ENCODE measurements at regions of chr6 and their contacts with region 1.

Region 1: DNA sequence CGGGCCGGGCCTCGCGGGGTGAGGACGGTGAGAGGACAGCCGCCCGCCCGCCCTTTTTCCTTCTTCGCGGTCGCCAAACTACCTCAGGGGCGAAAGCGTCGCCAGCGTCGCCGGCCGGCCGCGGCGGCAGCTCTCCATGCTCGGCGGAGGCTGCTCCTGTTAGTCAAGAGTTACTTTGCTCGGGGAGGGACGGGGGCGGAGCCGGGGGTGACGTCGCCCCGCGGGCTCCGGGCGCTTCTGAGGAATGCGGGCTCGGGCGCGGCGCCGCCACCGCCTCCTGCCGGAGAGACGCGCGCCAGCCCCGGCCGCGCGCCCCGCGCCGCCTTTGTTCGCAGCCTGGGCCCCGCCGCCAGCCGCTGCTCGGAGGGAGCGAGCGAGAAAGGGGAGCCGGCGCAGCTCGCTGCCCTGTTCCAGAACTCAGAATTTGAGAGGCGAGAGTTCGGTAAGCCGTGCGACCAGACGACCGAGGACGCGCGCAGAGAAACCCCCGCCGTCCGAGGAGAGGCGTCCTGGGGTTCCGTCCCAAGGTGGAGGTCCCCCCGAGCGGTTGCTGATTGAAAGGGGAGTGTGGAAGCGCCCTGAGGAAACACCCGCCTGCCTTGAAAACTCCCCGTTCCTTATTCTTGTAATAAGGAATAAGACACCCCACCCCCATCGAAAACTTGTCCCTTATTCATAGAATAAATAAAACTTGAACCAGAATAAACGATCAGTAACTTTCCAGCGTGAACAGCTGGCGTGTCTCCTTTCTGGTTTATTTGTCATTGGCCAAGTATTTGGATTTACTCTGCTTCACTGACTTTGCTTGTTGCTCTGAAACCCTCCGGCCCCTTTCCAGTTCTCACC is at the start of gene PTPRK:
- DNase-seq: peak; percentile 70 to 90 (median 87)
- ATAC-seq: peak; percentile 95
- H3K4me3 ChIP-seq: peak within 1 kb of the TSS; percentile 77
- H3K4me3 Mint-ChIP-seq: peak within 1 kb of the TSS; percentile 90 to 98 (median 94)
- H3K27ac ChIP-seq: peak within 1 kb of the TSS; percentile 59
- H3K27ac Mint-ChIP-seq: peak within 1 kb of the TSS; percentile 73 to 94 (median 82)
- H3K4me1 ChIP-seq: peaks cover 5 to 17% of the 10 kb centered on the region in 2 donors
- H3K4me1 Mint-ChIP-seq: peaks cover 8 to 22% (median 14%) of the 10 kb centered on the region in 7 donors
- H3K27me3 ChIP-seq: no peaks in the 10 kb centered on the region
- H3K27me3 Mint-ChIP-seq: peaks cover 52 to 89% (median 68%) of the 10 kb centered on the region in 5 donors
- total RNA-seq, gene PTPRK: 1.6 to 6.5 (median 3.9) TPM

Region 2: GRCh38 chr6:127366281-127367022 is 1154.2 kb before region 1 on chr6:
- CTCF ChIA-PET with region 1: no interaction called
- POLR2A ChIA-PET with region 1: no interaction called
- intact Hi-C with region 1: no loop called
- DNase-seq: no peak
- ATAC-seq: peak; percentile 70
- H3K4me3 ChIP-seq: no peak overlapping the region
- H3K4me3 Mint-ChIP-seq: no peak overlapping the region
- H3K27ac ChIP-seq: no peak overlapping the region
- H3K27ac Mint-ChIP-seq: no peak overlapping the region
- H3K4me1 ChIP-seq: no peaks in the 10 kb centered on the region
- H3K4me1 Mint-ChIP-seq: no peaks in the 10 kb centered on the region
- H3K27me3 ChIP-seq: no peaks in the 10 kb centered on the region
- H3K27me3 Mint-ChIP-seq: no peaks in the 10 kb centered on the region

Region 3: GRCh38 chr6:127792616-127793015 is 728.0 kb before region 1 on chr6:
- CTCF ChIA-PET with region 1: no interaction called
- POLR2A ChIA-PET with region 1: no interaction called
- intact Hi-C with region 1: loop called in 1 of 2 experiments (anchors 1 kb)
- DNase-seq: peak in 7 of 9 donors; percentile 44 to 70 (median 60)
- ATAC-seq: peak; percentile 83
- H3K4me3 ChIP-seq: peak overlapping the region; percentile 3
- H3K4me3 Mint-ChIP-seq: peak overlapping the region in 8 of 10 donors; percentile 14 to 80 (median 54)
- H3K27ac ChIP-seq: peak overlapping the region; percentile 43
- H3K27ac Mint-ChIP-seq: peak overlapping the region in 8 of 9 donors; percentile 22 to 90 (median 78)
- H3K4me1 ChIP-seq: peaks cover 34 to 43% of the 10 kb centered on the region in 2 donors
- H3K4me1 Mint-ChIP-seq: peaks cover 45 to 100% (median 92%) of the 10 kb centered on the region in 7 donors
- H3K27me3 ChIP-seq: no peaks in the 10 kb centered on the region
- H3K27me3 Mint-ChIP-seq: no peaks in the 10 kb centered on the region

Region 4: DNA sequence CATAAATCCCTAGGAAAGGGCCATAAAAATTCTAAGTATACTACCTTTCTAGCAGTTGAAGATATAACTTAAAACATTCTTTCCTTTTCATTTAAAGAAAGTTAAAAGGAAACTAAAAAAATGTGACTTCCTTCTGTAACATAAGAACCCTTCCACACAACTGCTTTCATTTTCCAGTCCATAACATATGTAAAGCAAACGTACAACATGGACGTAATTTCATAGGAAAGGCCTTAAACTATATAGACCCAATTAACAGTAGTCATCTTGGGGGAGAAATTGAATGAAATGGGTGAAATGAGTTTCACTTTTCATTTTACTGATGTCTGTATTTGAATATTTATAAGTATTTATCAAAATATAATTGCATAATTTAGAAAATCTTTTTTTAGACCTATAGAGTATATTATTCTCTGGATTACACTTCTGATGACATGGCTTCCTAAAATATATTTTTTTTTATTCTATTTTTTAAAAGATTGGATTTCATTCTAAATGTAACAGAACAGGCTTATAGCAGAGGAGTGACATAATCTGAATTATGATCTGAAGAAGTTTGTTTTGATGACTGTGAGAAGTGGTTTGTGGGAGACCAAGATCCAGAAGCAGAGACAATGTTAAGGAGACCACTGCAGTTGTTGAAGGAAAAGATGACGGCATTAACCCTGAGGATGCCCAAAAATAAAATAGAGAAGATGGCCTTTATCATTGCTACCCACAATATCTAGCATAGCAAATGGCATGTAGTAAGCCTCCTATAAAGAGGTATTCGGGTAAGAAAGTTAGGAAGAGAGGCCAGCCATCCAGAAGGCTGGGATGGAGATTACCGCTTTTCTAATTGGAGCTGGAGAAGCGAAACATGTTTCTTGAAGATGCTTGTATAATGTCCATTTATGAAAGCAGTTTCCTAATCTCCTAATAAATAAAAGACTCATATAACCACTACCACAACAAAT is 260.7 kb before region 1 on chr6:
- CTCF ChIA-PET with region 1: no interaction called
- POLR2A ChIA-PET with region 1: no interaction called
- intact Hi-C with region 1: loop called (anchors 5 kb)
- DNase-seq: peak in 7 of 9 donors; percentile 11 to 42 (median 29)
- ATAC-seq: peak; percentile 74
- H3K4me3 ChIP-seq: peak overlapping the region; percentile 30
- H3K4me3 Mint-ChIP-seq: peak overlapping the region; percentile 67 to 91 (median 84)
- H3K27ac ChIP-seq: peak overlapping the region; percentile 45
- H3K27ac Mint-ChIP-seq: peak overlapping the region; percentile 74 to 93 (median 90)
- H3K4me1 ChIP-seq: peaks cover 12 to 15% of the 10 kb centered on the region in 2 donors
- H3K4me1 Mint-ChIP-seq: peaks cover 15 to 46% (median 28%) of the 10 kb centered on the region in 7 donors
- H3K27me3 ChIP-seq: no peaks in the 10 kb centered on the region
- H3K27me3 Mint-ChIP-seq: peaks cover 0 to 3% (median 0%) of the 10 kb centered on the region in 5 donors

Region 5: GRCh38 chr6:128463942-128464341 is 56.7 kb before region 1 on chr6:
- CTCF ChIA-PET with region 1: no interaction called
- POLR2A ChIA-PET with region 1: no interaction called
- intact Hi-C with region 1: no loop called
- DNase-seq: no peak
- ATAC-seq: no peak
- H3K4me3 ChIP-seq: no peak overlapping the region
- H3K4me3 Mint-ChIP-seq: no peak overlapping the region
- H3K27ac ChIP-seq: no peak overlapping the region
- H3K27ac Mint-ChIP-seq: no peak overlapping the region
- H3K4me1 ChIP-seq: no peaks in the 10 kb centered on the region
- H3K4me1 Mint-ChIP-seq: no peaks in the 10 kb centered on the region
- H3K27me3 ChIP-seq: no peaks in the 10 kb centered on the region
- H3K27me3 Mint-ChIP-seq: peaks cover 0 to 6% (median 0%) of the 10 kb centered on the region in 5 donors

Region 6: DNA sequence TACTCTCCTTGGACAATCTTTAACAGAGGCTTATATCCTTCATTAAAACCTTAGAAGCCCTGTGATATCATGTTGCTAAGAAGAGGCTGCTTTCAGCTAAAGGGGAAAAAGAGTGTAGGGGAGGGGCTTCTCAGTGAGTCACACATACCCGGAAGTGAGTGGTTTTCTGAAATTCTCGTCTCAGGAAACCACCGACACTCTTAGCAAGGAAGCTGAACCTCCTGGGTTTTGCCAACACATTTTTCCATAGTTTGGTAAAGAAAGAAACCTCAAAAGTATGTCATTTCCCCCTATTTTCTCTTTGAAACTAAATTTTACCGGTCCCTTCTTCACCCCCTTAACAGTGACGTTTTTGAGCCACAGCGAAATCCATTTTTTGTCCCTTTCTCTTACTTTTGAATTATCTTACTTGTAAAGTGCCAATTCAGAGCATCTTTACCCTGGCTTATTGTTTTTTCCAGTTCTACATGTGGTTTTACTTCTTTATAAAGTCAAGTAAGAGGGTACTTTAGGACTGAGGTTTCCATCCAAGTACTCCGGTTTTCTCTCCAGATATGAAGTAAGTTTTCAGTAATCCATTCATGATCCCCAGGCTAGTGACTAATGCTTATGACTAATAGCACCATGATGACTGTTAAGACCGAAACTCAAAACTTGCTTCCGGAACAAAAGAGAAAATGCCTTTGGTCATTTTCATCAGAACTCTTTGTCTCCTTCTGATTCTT is 970.0 kb after region 1 on chr6:
- CTCF ChIA-PET with region 1: no interaction called
- POLR2A ChIA-PET with region 1: no interaction called
- intact Hi-C with region 1: loop called in 1 of 2 experiments (anchors 1 kb)
- DNase-seq: peak in 8 of 9 donors; percentile 53 to 89 (median 72)
- ATAC-seq: peak; percentile 96
- H3K4me3 ChIP-seq: peak overlapping the region; percentile 38
- H3K4me3 Mint-ChIP-seq: peak overlapping the region; percentile 61 to 90 (median 76)
- H3K27ac ChIP-seq: peak overlapping the region; percentile 73
- H3K27ac Mint-ChIP-seq: peak overlapping the region; percentile 84 to 97 (median 94)
- H3K4me1 ChIP-seq: peaks cover 15 to 21% of the 10 kb centered on the region in 2 donors
- H3K4me1 Mint-ChIP-seq: peaks cover 11 to 46% (median 32%) of the 10 kb centered on the region in 7 donors
- H3K27me3 ChIP-seq: no peaks in the 10 kb centered on the region
- H3K27me3 Mint-ChIP-seq: no peaks in the 10 kb centered on the region

Measured in naive thymus-derived CD4-positive, alpha-beta T cell (primary cell).